SK-N-SH (cell line): ENCODE measurements at regions of chr9 and their contacts with region 1.

Region 1: DNA sequence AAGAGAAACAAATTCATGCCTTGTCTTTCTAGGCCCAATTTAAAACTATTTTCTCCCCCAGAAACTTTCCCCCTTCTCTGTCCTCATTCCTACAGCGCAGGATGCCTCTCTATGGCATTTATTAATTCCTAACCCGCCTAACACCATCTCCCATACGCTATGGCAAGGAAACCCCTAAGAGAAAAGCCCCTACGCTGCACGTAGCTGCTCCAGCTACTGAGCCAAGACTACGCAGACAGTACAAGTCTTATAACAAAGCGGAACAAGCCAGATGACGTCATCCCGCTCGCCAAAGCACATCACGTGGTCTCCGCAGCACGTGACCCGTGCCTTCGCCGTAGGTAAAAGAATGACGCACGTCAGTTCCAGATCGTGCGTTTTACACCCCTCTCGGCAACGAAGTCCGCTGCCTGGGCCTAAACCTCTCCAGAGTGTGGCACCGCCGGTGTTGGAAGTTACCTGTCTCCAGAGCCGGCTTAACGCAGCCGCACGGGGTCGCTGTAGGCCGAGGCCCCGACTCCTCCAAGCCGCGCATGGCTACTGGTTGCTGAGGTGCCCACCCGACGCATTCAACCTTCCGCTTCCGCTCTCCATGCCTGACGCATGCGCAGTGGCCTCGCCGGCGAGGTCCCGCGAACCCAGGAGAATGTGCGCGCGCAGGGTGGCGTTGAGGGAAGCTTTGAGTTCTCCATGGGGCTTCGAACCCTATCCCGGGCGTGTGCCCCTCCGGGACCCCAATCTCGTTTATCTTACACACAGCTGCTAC is at the start of gene TRMO:
- DNase-seq: peak; percentile 93
- H3K4me3 ChIP-seq: peak within 1 kb of the TSS; percentile 72 to 74
- H3K27ac ChIP-seq: peak within 1 kb of the TSS; percentile 94 to 99
- H3K4me1 ChIP-seq: peaks cover 0 to 3% of the 10 kb centered on the region in 2 experiments; a peak in 3 of 4 replicates
- H3K27me3 ChIP-seq: no peaks in the 10 kb centered on the region
- CTCF ChIP-seq: peak; percentile 77
- EP300 ChIP-seq: peak in 1 of 2 experiments; percentile 24; a peak in 2 of 4 replicates
- RAD21 ChIP-seq: no peak; the same call in 1 of the 2 replicates
- polyA plus RNA-seq, gene TRMO: 8.1 and 11.8 TPM in 2 replicates

Region 2: DNA sequence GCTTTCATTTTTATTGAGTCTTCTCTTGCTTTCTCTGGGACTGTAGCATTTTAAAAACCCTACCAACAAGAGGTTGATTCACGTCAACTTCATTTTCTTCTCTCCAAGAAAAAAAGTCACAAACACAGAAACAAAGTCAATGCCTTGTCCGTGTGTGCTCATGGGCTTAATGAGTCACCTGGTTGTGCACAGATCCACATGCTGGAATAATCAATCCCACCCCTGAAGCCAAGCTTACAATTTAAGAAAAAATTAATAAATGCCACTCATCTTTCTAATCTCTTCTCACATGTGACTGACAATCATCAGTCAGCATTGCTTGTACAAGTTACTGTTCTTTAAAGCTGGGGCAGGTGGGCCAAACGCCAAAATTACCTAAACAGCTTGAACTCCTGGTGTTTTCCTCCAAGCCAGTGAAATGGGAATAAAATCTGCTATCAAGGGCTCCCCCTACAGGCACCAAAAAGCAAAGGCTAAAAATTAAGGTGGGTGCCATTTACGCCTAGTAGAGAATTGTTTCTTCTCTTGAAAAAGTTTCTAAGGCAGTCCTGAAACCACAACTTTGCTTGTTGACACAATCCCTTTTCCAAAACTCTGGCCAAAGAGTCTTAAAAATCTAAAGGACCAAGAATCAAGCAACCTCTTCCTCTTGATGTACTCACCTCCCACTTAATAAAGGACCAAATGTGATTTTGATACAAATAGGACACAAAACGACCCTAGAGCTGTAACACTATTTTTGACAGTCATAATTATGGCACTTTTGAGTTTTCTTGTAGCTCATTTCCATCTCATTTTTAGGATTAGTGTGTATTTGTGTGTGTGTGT is 21.2 kb before region 1 on chr9:
- CTCF ChIA-PET with region 1: interaction called, 35 read pairs
- POLR2A ChIA-PET with region 1: no interaction called
- DNase-seq: peak; percentile 61
- H3K4me3 ChIP-seq: no peak overlapping the region; a peak in 1 of 4 replicates
- H3K27ac ChIP-seq: no peak overlapping the region
- H3K4me1 ChIP-seq: no peaks in the 10 kb centered on the region
- H3K27me3 ChIP-seq: no peaks in the 10 kb centered on the region
- CTCF ChIP-seq: peak; percentile 93
- EP300 ChIP-seq: no peak
- RAD21 ChIP-seq: peak; percentile 70

Region 3: DNA sequence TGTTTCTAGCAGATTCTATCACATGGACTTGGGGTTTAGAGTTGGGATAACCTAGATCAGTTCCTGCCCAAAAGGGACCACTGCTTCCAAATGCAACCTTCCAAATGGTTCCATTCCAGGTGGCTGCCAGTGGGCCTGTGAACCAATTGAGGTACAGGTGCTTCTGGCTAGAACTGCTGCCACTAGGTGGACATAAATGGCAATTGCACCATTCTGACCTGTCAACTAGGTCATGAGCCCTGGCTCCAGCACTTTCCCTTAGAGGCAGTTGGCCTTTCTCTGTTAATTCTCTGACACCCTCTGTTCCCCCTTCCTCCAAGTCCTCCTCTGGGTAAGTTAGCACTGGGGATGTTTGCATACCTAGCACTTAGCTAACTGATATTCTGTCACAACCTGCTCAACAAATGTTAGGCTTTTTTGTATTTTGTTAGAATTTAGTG is 32.4 kb after region 1 on chr9:
- CTCF ChIA-PET with region 1: interaction called, 20 read pairs
- POLR2A ChIA-PET with region 1: no interaction called
- DNase-seq: peak; percentile 58
- H3K4me3 ChIP-seq: no peak overlapping the region; a peak in 1 of 4 replicates
- H3K27ac ChIP-seq: no peak overlapping the region
- H3K4me1 ChIP-seq: no peaks in the 10 kb centered on the region
- H3K27me3 ChIP-seq: no peaks in the 10 kb centered on the region; the same call in 1 of the 2 replicates
- CTCF ChIP-seq: peak; percentile 56
- EP300 ChIP-seq: no peak
- RAD21 ChIP-seq: peak; percentile 55

Region 4: DNA sequence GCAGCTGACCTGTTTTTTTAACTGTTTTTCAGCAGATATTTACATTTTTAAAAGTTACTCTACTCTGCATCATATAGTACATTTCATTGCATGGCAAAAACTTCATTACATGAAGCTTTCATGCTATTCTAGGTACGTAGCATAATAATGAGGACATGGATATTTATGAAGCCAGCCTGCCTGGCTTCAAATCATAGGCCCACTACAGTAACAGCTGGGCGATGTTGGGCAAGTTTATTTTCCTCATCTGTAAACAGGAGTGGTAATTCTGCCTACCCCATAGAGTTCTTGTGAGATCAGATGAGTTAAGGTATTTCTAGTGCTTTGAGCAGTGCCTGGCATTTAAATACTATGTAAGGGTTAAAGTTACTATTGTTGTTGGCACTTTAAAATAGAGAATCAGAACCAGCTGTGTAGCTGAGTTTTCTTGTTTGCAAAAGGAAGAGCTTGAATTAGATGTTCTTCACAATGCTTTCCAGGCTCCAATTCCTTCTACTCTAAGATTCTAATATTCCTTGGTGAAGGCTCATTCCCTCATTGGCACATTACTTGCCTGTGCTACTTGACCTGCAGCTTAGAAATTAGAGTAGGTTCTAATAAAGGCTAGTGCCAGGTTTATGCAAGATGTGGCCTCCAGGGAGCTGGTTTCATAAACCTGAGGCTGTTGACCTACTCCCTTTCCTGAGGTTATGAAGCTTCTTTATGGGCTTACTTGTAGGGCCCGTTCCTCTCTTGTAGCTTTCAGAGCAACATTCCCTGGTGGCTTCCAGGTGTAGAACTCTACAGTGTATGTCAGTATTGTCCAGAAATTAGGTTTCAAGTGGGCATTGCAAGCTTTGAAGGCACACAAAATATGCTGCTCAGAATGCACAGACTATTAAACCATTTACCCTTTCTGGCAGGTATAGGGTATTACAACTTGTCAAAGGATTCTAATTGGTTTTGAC is 75.5 kb after region 1 on chr9:
- CTCF ChIA-PET with region 1: interaction called, 13 read pairs
- POLR2A ChIA-PET with region 1: no interaction called
- DNase-seq: no peak
- H3K4me3 ChIP-seq: no peak overlapping the region
- H3K27ac ChIP-seq: peak overlapping the region in 1 of 2 experiments; percentile 9; a peak in 2 of 4 replicates
- H3K4me1 ChIP-seq: no peaks in the 10 kb centered on the region
- H3K27me3 ChIP-seq: no peaks in the 10 kb centered on the region
- CTCF ChIP-seq: no peak
- EP300 ChIP-seq: no peak
- RAD21 ChIP-seq: no peak

Region 5: DNA sequence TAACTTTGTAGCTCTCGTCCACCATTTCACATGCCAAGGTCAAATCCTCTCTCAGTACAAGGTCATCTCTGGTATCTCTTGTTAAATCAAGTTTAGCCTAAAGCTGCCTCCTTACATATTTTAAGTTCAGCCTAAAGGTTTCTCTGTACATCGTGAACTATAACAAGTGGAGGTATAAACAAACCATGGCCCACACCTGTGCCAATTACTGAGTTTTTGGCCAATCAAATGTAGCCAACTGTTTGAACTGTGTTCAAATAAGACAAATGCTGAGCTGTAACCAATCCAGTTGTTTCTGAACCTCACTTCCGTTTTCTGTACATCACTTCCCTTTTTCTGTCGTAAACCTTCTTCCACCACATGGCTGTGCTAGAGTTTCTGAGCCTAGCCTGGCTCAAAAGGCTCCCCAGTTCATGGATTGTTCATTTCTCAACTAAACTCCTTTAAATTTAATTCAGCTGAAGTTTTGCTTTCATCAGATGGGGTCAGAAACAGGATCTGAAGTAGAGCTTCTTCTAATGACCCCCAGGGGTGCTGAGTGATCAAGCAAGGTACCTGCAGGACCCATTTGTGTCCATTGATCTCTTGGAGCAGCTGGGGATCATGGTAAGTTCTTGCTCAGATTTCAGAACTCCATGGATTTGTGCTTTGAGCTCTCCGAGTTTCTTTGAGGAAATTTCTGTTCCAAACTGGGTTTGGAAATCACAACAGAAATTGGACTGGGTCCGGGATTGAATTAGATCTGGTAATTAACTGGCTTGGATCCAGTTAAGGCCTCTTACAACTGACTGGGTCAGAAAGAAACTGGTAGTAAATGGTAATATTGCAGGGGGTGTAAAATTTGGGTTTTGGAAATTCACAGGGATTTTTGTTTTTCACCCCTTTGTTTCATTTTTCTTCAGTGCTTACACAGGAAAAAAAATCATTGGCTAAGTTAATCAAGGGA is 123.4 kb after region 1 on chr9:
- CTCF ChIA-PET with region 1: interaction called, 96 read pairs
- POLR2A ChIA-PET with region 1: no interaction called
- DNase-seq: no peak
- H3K4me3 ChIP-seq: no peak overlapping the region
- H3K27ac ChIP-seq: no peak overlapping the region
- H3K4me1 ChIP-seq: no peaks in the 10 kb centered on the region
- H3K27me3 ChIP-seq: no peaks in the 10 kb centered on the region
- CTCF ChIP-seq: no peak
- EP300 ChIP-seq: no peak
- RAD21 ChIP-seq: no peak

Region 6: DNA sequence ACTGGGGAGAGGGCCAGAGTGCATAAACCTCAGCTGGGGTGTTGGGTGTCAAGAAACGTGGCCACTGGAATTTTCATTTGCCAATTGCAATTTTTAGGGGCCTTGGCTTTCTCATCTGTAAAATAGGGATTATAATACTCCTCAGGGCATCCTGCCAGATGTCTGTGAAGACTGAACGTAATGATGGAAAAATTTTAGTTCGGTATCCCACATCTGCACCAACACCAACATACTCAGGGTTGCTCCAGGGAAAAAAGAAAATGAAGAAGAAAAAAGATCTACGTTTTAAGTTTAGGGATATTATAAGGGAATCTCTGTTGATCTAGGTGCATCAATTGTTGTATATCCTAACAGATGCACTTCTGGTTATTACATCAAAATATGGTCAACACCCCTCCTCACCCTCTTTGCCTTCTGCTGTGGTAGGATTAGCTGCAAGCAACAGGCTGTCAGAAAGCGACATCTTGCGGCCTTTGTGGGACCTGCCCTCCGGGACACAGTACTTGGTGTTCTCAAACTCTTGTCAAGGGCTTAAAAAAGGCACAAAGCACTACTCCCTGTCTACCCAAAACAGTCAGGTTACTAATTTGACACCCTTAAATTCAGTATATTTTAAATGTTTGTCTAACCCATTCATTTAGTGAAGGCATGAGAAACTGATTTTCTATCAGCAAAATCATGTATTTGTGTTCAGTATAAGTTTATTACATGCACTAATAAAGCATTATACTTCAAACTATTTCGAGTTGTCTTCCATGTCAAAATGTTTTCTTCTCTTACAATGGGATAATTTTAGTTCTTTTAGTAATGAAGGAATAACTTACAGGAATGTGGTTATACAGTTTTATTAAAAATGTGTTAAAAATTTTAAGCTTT is 341.6 kb after region 1 on chr9:
- CTCF ChIA-PET with region 1: interaction called, 21 read pairs
- POLR2A ChIA-PET with region 1: no interaction called
- DNase-seq: peak; percentile 79
- H3K4me3 ChIP-seq: peak overlapping the region in 1 of 2 experiments; percentile 20; a peak in 1 of 4 replicates
- H3K27ac ChIP-seq: no peak overlapping the region
- H3K4me1 ChIP-seq: no peaks in the 10 kb centered on the region
- H3K27me3 ChIP-seq: no peaks in the 10 kb centered on the region
- CTCF ChIP-seq: peak; percentile 98
- EP300 ChIP-seq: no peak
- RAD21 ChIP-seq: peak; percentile 99